ENCODE measurements at regions of chr10 and their contacts with region 1.

Region 1: GRCh38 chr10:11270135-11270857 is 252.6 kb downstream of the CELF2 start:
- DNase-seq: peak; percentile 79 to 93
- ATAC-seq: peak; percentile 91
- H3K4me3 ChIP-seq: no peak overlapping the region
- H3K27ac ChIP-seq: no peak overlapping the region
- H3K4me1 ChIP-seq: no peaks in the 10 kb centered on the region
- H3K27me3 ChIP-seq: no peaks in the 10 kb centered on the region

Region 2: GRCh38 chr10:11058965-11059364 is 211.3 kb before region 1 on chr10:
- intact Hi-C with region 1: loop called in 1 of 2 experiments (anchors 10 kb)
- DNase-seq: no peak
- ATAC-seq: no peak
- H3K4me3 ChIP-seq: no peak overlapping the region
- H3K27ac ChIP-seq: no peak overlapping the region
- H3K4me1 ChIP-seq: peaks cover 0 to 2% of the 10 kb centered on the region in 2 donors
- H3K27me3 ChIP-seq: no peaks in the 10 kb centered on the region

Region 3: GRCh38 chr10:11145495-11145855 is 124.8 kb before region 1 on chr10:
- intact Hi-C with region 1: no loop called
- DNase-seq: peak in 1 of 2 donors; percentile 66
- ATAC-seq: peak; percentile 47
- H3K4me3 ChIP-seq: no peak overlapping the region
- H3K27ac ChIP-seq: no peak overlapping the region
- H3K4me1 ChIP-seq: peaks cover 2 to 8% of the 10 kb centered on the region in 2 donors
- H3K27me3 ChIP-seq: no peaks in the 10 kb centered on the region

Measured in aorta (tissue), 5 donors.